ENCODE measurements at regions of chr1 and their contacts with region 1.

Region 1: GRCh38 chr1:115807723-115808122 is 33.2 kb downstream of the NHLH2 start:
- DNase-seq: peak; percentile 66
- ATAC-seq: peak; percentile 87
- H3K4me3 ChIP-seq: no peak overlapping the region
- H3K27ac ChIP-seq: no peak overlapping the region
- H3K4me1 ChIP-seq: no peaks in the 10 kb centered on the region
- H3K27me3 ChIP-seq: peaks cover 4% of the 10 kb centered on the region
- CTCF ChIP-seq: peak; percentile 73
- POLR2A ChIP-seq: no peak
- RAD21 ChIP-seq: peak; percentile 62

Region 2: GRCh38 chr1:115854005-115854404 is 46.3 kb after region 1 on chr1:
- CTCF ChIA-PET with region 1: no interaction called
- POLR2A ChIA-PET with region 1: no interaction called
- dilution Hi-C with region 1: no loop called
- in situ Hi-C with region 1: no loop called
- intact Hi-C with region 1: loop called (anchors 5 kb)
- DNase-seq: no peak
- ATAC-seq: no peak
- H3K4me3 ChIP-seq: no peak overlapping the region
- H3K27ac ChIP-seq: no peak overlapping the region
- H3K4me1 ChIP-seq: no peaks in the 10 kb centered on the region
- H3K27me3 ChIP-seq: no peaks in the 10 kb centered on the region
- CTCF ChIP-seq: no peak
- POLR2A ChIP-seq: no peak
- RAD21 ChIP-seq: no peak

Region 3: GRCh38 chr1:115980998-115981993 is 173.6 kb after region 1 on chr1:
- CTCF ChIA-PET with region 1: interaction called, 3 read pairs
- POLR2A ChIA-PET with region 1: no interaction called
- dilution Hi-C with region 1: no loop called
- in situ Hi-C with region 1: loop called (anchors 10 kb)
- intact Hi-C with region 1: loop called (anchors 1 kb)
- DNase-seq: peak; percentile 16
- ATAC-seq: peak; percentile 49; the same call in 1 of the 2 replicates
- H3K4me3 ChIP-seq: no peak overlapping the region
- H3K27ac ChIP-seq: no peak overlapping the region
- H3K4me1 ChIP-seq: no peaks in the 10 kb centered on the region
- H3K27me3 ChIP-seq: peaks cover 15% of the 10 kb centered on the region
- CTCF ChIP-seq: peak; percentile 55
- POLR2A ChIP-seq: no peak
- RAD21 ChIP-seq: peak; percentile 62

Region 4: GRCh38 chr1:116020668-116021275 is 213.0 kb after region 1 on chr1:
- CTCF ChIA-PET with region 1: interaction called, 3 read pairs
- POLR2A ChIA-PET with region 1: no interaction called
- dilution Hi-C with region 1: no loop called
- in situ Hi-C with region 1: no loop called
- intact Hi-C with region 1: loop called (anchors 1 kb)
- DNase-seq: peak; percentile 40
- ATAC-seq: peak; percentile 77; the same call in 1 of the 2 replicates
- H3K4me3 ChIP-seq: no peak overlapping the region
- H3K27ac ChIP-seq: no peak overlapping the region
- H3K4me1 ChIP-seq: no peaks in the 10 kb centered on the region
- H3K27me3 ChIP-seq: no peaks in the 10 kb centered on the region
- CTCF ChIP-seq: peak; percentile 38; the same call in 1 of the 2 replicates
- POLR2A ChIP-seq: no peak
- RAD21 ChIP-seq: peak; percentile 25; the same call in 1 of the 2 replicates